Activated CD4-positive, alpha-beta memory T cell treated with anti-CD3 and anti-CD28 coated beads, Interleukin-2, amount 10 ng/mL, durations not matched to agents 7 days and 5 days (primary cell): ENCODE measurements at regions of chr1 and their contacts with region 1.

Region 1: DNA sequence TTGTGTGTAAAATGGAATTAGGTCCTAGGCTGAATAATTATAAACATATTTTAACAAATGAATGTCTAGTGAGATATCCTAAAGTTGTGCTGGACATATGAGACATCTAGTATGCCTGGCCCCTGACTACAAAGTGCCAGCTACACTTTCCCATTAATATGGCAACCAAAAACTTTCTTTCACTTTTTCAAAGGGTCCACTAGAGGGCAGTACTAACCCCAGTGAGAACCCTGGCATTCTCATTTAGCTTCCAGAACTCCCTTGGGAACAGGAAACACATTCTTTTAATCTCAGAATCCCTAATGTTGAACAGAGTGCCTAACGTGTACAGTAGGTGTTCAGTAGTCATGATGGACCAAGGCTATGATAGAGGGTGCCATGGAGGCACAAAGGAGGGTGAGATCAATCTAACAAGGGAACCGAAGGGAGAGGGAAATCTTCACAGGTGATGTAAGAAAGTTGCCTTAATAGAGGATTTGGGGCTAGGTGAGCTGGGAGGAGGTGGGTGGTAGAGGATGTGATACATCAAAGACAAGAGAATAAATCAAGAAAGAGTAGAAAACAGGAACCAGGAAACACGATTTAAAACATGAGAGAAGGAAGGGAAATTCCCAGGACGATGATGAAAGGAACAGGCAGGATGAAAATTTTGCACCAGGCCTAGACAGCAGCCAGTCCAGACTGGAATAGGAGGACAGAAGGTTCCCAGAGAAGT is 41.6 kb downstream of the NSL1 start:
- DNase-seq: no peak
- H3K4me3 Mint-ChIP-seq: no peak overlapping the region
- H3K27ac Mint-ChIP-seq: peak overlapping the region; percentile 11
- H3K4me1 Mint-ChIP-seq: peaks cover 45% of the 10 kb centered on the region
- H3K27me3 Mint-ChIP-seq: no peaks in the 10 kb centered on the region

Region 2: DNA sequence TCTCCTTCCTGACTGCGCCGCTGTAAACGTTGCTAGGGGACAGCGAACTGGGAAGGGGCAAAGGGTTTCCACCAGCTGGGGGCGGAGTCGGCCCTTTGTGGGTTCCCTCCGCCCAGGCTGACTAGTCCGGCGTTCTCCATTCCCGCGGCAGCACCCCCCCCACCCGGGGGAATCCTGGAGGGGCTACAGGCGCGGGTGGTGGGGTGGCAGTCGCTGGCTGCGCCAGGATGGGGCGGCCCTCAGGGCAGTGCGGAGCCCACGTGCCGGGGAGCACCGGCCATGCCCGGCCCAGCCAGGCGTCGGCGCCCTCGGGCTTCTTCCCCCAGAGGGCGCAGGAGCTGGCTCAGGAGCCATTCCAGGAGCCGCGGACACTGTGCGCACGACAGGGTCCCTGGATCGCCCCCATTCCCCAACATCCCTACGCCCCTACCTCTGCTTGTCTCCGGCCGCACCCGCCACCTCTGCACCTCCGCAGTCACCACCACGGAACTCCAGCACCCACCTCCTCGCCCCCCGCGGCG is 50.8 kb before region 1 on chr1:
- CTCF ChIA-PET with region 1: interaction called, 22 read pairs
- POLR2A ChIA-PET with region 1: interaction called, 3 read pairs
- DNase-seq: peak; percentile 66
- H3K4me3 Mint-ChIP-seq: peak overlapping the region; percentile 74
- H3K27ac Mint-ChIP-seq: peak overlapping the region; percentile 77
- H3K4me1 Mint-ChIP-seq: peaks cover 75% of the 10 kb centered on the region
- H3K27me3 Mint-ChIP-seq: peaks cover 2% of the 10 kb centered on the region

Region 3: DNA sequence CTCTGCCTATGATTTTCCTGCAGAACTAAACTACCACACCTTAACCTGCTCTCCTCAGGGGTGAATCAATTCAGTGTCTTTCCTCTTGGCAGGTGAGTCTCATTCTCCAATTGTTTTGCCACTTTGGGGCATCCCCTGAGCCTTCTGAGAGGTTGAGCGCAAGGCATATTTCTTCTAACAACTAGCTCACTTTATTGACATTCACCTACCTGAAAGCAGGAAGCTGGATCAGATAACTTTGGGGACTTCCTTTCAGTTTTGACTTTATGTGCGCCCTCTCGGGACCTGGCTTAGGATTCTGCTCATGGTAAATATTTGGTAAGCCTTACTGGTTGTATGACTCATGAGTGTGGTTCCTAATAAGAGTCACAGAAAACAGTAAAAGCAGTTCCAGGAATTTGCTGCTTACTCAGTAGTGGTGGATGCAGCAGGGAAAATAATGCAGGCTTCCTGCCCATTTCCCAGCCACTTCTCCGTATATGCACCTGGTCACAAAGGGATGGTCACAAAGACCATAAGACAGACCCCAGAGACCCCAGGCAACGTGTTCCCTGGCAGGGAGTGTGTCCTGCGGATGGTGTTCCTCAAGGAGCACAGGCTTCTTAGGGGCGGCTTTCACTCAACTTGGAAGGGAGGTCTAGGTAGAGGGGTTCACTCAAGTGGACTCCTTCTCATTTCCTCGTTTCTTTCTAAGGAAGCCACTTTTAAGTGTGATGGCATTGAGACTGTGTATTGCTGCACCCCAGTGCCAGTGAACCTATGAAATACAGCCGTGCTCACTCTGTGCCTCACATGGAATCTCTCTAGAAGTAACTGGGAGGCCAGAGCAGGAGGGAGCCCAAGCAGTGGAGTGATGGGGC is 28.4 kb before region 1 on chr1:
- CTCF ChIA-PET with region 1: interaction called, 27 read pairs
- POLR2A ChIA-PET with region 1: interaction called, 10 read pairs
- DNase-seq: peak; percentile 67
- H3K4me3 Mint-ChIP-seq: peak overlapping the region; percentile 66
- H3K27ac Mint-ChIP-seq: peak overlapping the region; percentile 92
- H3K4me1 Mint-ChIP-seq: peaks cover 57% of the 10 kb centered on the region
- H3K27me3 Mint-ChIP-seq: no peaks in the 10 kb centered on the region

Region 4: DNA sequence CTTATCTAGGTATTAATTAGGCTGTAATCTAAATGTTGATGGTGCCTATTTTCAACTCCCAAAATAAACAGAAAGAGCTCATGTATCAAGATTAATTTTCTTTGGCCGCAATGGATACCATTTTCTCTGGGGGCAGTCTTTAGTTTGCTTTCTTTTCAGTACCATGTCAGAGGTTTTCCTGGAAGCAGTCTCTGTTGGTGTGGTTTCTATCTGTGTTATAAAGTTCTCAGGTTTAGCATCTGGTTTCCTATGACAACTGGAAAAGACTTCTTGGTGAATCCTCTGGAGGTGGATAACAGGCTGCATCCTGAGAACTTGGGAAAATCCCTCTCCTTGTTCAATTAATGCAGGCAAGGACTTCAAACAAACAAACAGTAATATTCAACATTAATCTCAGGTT is 11.6 kb before region 1 on chr1:
- CTCF ChIA-PET with region 1: interaction called, 35 read pairs
- POLR2A ChIA-PET with region 1: no interaction called
- DNase-seq: no peak
- H3K4me3 Mint-ChIP-seq: peak overlapping the region; percentile 19
- H3K27ac Mint-ChIP-seq: peak overlapping the region; percentile 88
- H3K4me1 Mint-ChIP-seq: peaks cover 43% of the 10 kb centered on the region
- H3K27me3 Mint-ChIP-seq: no peaks in the 10 kb centered on the region

Region 5: DNA sequence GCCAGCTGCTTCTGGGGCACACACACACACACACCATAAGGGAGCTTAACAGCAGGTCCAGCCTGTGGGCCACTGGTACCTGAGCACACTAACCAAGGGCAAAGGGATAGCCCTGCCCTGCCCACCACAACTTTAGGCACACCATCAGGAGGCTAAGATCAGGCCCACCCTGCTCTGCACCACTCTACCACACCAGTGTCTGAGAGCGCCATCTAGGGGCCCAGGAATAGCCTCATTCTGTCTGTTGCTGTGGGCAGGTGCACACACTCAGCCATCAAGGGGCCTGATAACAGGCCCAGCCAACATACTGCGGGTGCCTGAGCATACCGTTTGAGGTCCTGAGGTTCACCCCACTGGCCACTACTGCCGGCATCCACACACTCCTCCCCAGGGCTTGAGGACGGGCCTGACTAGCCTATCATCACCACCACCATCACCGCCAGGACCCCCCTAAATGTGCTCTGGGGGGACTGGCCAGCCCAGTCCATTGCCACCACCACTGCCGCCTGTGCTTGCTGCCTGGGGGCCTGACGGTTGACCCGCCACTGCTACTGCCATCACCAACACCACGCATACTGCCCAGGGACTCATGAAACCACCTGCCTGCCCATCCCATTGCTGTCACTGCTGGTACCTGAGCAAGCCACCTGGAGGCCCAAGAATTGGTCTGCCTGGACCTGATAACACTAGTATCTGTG is 10.3 kb after region 1 on chr1:
- CTCF ChIA-PET with region 1: interaction called, 39 read pairs
- POLR2A ChIA-PET with region 1: interaction called, 3 read pairs
- DNase-seq: peak; percentile 66
- H3K4me3 Mint-ChIP-seq: no peak overlapping the region
- H3K27ac Mint-ChIP-seq: no peak overlapping the region
- H3K4me1 Mint-ChIP-seq: peaks cover 19% of the 10 kb centered on the region
- H3K27me3 Mint-ChIP-seq: no peaks in the 10 kb centered on the region

Region 6: DNA sequence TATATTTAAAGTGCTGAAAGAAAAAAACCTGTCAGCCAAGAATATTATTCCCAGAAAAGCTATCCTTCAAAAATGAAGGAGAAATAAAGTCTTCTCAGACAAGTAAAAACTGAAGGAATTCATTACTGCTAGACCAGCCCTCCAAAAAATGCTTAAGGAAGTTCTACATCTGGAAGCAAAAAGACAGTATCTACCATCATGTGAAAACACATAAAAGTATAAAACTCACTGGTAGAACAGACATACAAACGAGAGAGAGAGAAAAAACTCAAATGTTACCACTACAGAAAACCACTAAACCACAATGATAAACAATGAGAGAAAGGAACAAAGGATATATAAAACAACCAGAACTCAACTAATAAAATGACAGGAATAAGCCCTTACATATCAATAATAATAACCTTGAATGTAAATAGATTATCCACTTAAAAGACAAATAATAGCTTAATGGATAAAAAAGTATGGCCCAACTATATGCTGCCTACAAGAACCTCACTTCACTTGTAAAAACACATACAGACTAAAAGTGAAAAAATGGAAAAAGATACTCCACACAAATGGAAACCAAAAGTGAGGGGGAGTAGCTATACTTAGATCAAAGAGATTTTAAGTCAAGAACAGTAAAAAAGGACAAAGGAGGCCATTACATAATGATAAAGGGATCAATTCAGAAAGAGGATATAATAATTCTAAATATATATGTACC is 19.6 kb after region 1 on chr1:
- CTCF ChIA-PET with region 1: interaction called, 39 read pairs
- POLR2A ChIA-PET with region 1: interaction called, 3 read pairs
- DNase-seq: no peak
- H3K4me3 Mint-ChIP-seq: peak overlapping the region; percentile 8
- H3K27ac Mint-ChIP-seq: peak overlapping the region; percentile 10
- H3K4me1 Mint-ChIP-seq: peaks cover 40% of the 10 kb centered on the region
- H3K27me3 Mint-ChIP-seq: no peaks in the 10 kb centered on the region